Posterior cingulate gyrus (tissue), 11 donors: ENCODE measurements at regions of chr20 and their contacts with region 1.

Region 1: DNA sequence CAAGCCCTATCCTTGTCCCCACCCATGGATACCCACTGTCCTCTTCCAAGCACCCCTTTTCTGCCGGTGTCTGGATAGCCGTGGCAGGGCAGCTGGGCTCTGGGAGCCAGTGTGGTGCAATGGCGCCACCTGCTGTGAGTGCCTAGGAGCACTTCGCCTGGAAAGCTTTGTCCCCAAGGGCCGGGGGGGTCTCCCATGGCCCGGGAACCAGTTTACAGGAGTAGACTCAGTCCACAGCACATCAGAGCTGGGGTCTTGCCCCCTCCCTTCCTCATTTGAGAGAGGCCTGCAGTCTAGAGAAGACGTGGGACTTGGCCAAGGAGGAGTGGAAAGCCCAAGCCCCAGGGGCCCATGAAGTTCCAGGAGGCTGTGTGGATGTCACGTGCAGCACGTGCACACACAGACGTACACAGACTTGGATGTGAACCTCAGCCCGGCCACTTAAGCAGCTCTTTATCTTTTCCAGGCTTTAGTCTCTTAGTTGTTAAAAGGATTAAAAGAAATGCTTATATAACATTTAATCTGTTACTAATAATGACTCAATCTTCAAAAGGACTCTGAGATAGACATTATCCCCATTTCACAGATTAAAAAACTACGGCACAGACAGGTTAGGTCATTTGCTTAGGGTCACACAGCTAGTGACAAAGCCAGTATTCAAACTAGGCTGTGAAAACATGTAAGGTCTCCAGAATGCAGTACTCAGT is 40.9 kb upstream of the CDH22 start:
- DNase-seq: peak; percentile 65 to 96 (median 77)

Region 2: DNA sequence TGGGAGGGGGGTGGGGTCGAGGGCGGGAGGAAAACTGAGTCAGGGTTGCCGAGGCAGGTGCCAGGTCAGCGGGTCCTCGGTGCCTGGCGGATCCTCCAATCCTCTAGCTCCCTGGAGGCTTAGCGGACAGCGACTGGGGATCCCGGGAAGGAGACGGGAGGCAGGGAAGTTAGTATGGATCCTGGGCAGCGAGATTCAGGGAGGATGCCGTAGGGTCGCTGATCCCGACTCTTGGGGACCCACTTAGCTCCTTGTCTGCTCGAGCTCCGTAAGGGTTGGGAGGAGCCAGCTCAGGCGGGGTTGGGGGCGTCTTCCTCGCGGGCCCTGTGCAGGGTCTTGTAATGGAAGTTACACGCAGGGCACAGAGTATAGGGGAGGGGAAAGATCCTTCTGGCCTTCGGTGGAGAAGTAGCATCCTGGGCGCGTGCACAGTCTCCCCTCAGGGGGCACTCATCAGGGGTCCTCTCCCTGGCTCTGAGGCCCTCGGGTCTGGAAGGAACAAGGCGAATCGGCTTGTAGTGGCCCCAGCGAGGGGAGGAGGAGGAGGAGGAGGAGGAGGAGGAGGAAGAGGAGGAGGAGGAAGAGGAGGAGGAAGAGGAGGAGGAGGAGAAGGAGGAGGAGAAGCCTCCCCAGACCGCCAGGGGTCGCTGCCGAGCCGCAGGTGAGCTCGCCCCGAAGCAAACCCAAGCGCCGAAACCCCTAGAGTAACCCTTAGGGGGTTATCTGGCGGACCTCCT is 326.6 kb before region 1 on chr20:
- intact Hi-C with region 1: loop called (anchors 10 kb)
- DNase-seq: peak; percentile 64 to 95 (median 77)

Region 3: DNA sequence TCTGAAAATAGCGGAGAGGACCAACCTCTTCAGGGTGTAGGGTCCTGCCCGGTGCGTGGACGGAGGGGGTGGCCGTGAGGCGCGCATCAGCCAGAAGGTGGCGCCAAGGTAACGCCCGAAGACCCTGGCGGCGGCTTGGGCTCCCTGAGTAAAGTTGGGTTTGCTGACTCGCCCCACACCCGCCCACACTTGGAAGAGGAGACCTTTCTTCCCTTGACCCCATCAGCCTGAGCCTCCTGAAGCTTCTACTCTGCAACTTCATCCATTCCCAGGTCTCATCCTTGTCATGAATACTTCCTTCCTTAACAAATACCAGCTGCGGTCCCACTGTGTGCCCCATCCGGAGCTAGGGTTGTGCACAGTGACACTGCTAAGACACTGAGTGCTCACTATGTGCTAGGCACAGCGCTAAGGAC is 216.5 kb before region 1 on chr20:
- intact Hi-C with region 1: loop called (anchors 2 kb)
- DNase-seq: peak; percentile 50 to 96 (median 74)

Region 4: DNA sequence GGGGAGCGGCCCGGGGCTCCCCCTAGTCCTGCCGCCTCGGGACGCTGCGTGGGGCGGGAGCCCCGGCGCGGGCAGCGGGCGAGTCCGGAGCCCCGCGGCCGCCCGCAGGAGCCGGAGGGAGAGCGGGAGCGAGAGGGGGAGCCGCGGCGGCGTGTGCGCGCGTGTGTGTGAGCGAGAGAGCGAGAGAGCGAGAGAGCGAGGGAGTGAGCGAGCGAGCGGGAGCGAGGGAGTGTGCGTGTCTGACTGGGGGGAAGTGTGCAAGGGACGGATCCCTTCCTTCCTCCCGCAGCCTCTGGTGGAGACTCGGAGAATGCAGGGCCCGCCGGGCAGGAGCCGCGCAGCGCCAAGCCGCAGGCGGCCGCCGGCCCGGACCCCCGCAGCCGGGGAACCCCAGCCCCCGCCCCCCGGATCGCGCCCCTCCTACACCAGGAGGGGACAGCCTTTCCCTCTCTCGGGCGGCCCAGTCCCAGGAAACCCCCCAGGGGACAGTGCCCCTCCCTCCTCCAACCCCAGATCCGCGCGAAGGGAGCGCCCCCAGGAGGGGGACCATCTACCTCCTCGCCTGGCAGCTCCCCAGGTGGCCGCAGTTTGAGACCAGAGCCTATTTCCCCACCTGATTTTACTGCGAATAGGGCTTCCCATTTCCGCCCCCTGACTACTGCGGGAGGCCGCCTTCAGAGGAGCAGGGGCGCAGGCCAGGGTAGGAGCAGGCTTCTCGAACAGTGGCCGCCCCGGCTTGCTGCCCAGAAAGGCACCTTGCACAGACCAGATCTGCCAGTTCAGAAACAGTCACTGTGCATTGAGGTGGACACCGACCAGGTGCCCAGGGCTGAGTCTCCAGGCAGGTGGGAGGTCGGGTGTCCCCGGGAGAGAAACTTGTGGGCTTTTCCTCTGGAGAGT is 40.7 kb before region 1 on chr20 and contains the start of gene CDH22:
- intact Hi-C with region 1: loop called (anchors 2 kb)
- DNase-seq: peak; percentile 51 to 94 (median 70)

Region 5: DNA sequence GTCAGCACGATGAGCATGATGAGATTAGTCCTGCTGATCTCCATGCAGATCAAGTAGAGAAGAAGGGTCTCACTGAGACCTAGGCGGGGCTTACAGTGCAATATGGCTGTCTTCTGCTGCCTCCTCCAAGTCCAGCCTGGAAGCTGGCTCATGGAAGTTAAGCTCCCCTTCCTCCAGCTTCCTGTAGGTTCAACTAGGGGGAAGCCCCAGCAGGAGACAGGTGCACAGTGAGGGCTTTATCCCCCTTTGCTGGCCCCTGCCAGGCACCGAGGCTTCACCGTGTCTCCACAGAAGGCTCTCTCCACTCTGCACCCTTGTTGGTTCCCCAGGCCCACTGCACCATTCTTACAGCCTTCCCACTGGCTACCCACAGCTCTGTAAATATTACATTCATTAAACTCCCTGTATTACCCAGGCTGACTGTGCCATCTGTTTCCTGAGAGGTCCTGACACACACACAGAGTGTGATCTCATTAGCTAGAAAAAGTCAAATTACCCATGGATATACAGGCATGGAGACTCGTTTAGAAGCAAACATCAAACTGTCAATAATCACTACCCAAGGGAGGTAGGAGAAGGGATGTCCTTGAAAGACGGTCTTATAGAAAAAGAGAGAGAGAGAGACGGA is 450.7 kb after region 1 on chr20:
- intact Hi-C with region 1: no loop called
- DNase-seq: peak in 1 of 10 donors; percentile 55